ENCODE measurements at regions of chr7 and their contacts with region 1.

Region 1: GRCh38 chr7:7416031-7416858 is 119.4 kb downstream of the COL28A1 start:
- DNase-seq: peak; percentile 87 to 100
- H3K4me3 ChIP-seq: no peak overlapping the region
- H3K27ac ChIP-seq: peak overlapping the region; percentile 84
- H3K4me1 ChIP-seq: peaks cover 36% of the 10 kb centered on the region
- H3K27me3 ChIP-seq: no peaks in the 10 kb centered on the region
- CTCF ChIP-seq: no peak

Region 2: GRCh38 chr7:5892498-5892897 is 1523.7 kb before region 1 on chr7:
- CTCF ChIA-PET with region 1: no interaction called
- POLR2A ChIA-PET with region 1: interaction called, 15 read pairs
- intact Hi-C with region 1: no loop called
- DNase-seq: no peak
- H3K4me3 ChIP-seq: no peak overlapping the region
- H3K27ac ChIP-seq: no peak overlapping the region
- H3K4me1 ChIP-seq: no peaks in the 10 kb centered on the region; the same call in 1 of the 2 replicates
- H3K27me3 ChIP-seq: no peaks in the 10 kb centered on the region
- CTCF ChIP-seq: no peak

Region 3: GRCh38 chr7:7265081-7265686 is 151.1 kb before region 1 on chr7:
- CTCF ChIA-PET with region 1: no interaction called
- POLR2A ChIA-PET with region 1: no interaction called
- intact Hi-C with region 1: loop called (anchors 10 kb)
- DNase-seq: no peak
- H3K4me3 ChIP-seq: no peak overlapping the region
- H3K27ac ChIP-seq: no peak overlapping the region
- H3K4me1 ChIP-seq: peaks cover 10% of the 10 kb centered on the region
- H3K27me3 ChIP-seq: no peaks in the 10 kb centered on the region
- CTCF ChIP-seq: no peak

Region 4: GRCh38 chr7:7352845-7353244 is 63.4 kb before region 1 on chr7:
- CTCF ChIA-PET with region 1: interaction called, 3 read pairs
- POLR2A ChIA-PET with region 1: no interaction called
- intact Hi-C with region 1: loop called (anchors 1 kb)
- DNase-seq: peak; percentile 18 to 57
- H3K4me3 ChIP-seq: no peak overlapping the region
- H3K27ac ChIP-seq: no peak overlapping the region
- H3K4me1 ChIP-seq: peaks cover 37% of the 10 kb centered on the region
- H3K27me3 ChIP-seq: no peaks in the 10 kb centered on the region
- CTCF ChIP-seq: peak; percentile 32; the same call in 1 of the 2 replicates

Region 5: DNA sequence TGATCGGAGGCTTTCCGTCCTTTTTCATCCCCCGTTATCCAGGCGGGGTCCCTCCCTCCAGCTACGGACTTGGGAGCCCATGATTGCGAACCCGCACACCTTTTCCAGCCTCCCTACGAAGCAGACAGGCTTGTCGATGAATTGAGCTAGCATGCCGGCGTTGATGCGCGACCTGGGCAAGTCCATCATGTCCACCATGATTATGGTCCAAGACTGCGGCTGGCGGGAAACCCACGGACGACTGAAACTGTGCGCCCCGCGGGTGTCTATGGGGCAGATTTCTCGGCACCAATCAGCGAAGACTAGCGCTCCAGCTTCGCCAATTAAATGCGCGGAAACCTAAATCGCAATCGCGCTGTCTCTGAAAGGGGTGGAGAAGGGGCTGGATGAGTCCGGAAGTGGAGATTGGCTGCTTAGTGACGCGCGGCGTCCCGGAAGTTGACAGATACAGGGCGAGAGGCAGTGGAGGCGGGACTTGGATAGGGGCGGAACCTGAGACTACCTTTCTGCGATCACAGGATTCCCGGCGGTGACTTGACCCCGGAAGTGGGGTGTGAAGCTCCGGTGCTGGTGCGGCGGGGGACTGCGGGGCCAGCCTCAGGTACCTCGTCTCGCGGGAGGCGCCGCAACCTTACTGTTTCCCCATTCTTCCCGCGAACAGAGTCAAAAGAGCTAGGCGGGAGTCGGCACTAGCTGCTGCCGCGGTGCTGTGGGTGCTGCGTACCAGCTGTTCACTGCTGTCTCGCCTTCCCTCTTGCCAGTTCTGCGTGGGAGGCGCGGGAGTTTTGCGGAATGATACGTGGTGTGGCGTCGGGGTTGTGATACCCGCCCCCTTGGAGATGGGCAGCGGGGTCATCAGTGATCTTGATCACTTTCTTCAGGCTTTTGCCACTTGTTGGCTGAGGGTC is 224.2 kb after region 1 on chr7 and contains the start of gene UMAD1:
- CTCF ChIA-PET with region 1: no interaction called
- POLR2A ChIA-PET with region 1: no interaction called
- intact Hi-C with region 1: loop called (anchors 1 kb)
- DNase-seq: peak; percentile 99
- H3K4me3 ChIP-seq: peak within 1 kb of the TSS; percentile 83
- H3K27ac ChIP-seq: peak within 1 kb of the TSS; percentile 58
- H3K4me1 ChIP-seq: peaks cover 27% of the 10 kb centered on the region
- H3K27me3 ChIP-seq: no peaks in the 10 kb centered on the region
- CTCF ChIP-seq: no peak
- total RNA-seq, gene UMAD1: 15.5 and 20.5 TPM in 2 replicates

Measured in PC-9 (cell line).